ENCODE measurements at regions of chr17 and their contacts with region 1.

Region 1: DNA sequence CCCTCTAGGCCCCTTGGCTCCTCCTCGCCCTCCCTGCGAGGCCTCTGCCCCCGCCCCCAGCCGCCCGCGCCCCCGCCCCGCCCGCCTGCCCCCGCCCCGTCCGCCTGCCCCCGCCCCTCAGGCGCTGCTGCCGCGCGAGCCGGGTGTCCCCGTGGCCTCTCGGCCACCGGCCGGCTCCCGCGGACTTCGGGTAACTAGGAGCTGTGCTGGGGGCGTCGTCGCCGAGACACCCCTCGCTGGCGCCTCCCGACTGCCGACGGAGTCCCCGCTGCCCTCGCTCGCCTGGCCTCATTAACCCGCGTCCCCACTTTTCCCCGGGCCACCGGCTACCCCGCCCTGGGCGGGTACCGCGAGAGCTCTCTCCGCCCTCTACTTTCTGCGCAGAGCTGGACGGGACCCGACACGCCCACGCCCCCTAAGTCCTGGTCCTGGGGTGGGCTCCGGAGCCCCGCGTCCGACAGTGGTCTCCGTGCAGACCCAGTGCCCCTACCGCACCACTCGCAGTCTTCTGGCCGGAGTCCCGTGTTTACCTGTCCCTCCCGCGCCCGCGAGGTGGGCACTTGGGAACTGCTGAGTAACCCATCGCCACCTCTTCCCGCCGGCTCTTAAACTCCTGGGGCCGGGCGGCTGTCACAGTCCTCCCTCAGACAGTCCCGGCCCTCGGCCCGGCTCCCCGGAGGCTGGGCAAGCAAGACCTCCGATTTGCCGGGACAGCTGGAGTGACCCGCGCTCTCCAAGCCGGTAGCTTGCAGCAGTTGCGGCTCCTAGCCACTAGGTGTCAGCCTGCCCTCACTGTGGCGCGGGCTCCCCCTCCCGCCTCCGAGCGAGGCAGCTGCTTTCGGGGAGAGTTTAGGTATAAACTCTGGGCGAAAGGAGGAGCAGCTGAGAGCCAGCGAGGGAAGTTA is at the start of gene TLCD1:
- DNase-seq: peak; percentile 96
- ATAC-seq: peak; percentile 80
- total RNA-seq, gene TLCD1: 2.4 TPM

Region 2: GRCh38 chr17:28750178-28751047 is 23.9 kb after region 1 on chr17:
- intact Hi-C with region 1: loop called (anchors 1 kb)
- DNase-seq: peak; percentile 96
- ATAC-seq: peak; percentile 86

Region 3: GRCh38 chr17:28777178-28777577 is 50.7 kb after region 1 on chr17:
- intact Hi-C with region 1: no loop called
- DNase-seq: no peak
- ATAC-seq: no peak

Region 4: DNA sequence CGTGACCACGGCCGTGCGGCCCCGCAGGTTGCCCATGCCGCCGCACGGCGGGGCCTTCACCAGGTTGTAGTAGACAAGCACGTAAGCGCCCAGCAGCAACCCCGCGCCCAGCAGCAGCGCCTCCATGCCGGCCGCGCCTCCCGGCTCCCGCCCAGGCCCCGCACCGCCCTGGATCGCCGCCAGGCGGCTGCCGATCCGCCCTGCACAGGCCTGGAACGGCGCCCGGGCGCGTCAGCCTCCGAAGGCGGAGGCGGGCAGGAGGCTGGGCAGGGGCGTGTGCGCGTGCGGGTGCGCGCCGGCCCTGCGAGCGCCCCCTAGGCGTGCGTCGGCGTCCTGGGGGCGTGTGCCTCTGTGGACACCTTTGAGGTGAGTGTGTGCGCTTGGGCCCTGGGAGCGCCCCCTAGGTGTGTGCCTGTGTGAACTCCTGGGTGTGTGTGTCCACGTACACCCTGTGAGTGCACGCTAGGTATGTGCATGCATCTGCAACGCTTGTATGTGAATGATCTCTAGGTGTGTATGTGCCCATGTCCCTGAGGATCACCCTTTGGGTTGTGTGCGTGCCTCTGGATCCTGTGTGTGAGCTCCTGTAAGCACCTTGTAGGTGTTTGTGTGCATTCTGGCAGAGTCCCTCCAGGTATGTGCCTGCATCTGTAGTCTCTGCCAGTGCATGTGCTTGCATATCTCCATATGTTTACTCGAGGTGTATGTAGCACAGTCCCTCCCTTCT is 176.5 kb after region 1 on chr17 and contains the start of gene DHRS13:
- intact Hi-C with region 1: loop called (anchors 5 kb)
- DNase-seq: peak; percentile 96
- ATAC-seq: peak; percentile 90
- total RNA-seq, gene DHRS13: 3.0 TPM

Region 5: GRCh38 chr17:28951991-28952975 is 225.8 kb after region 1 on chr17:
- intact Hi-C with region 1: loop called (anchors 2 kb)
- DNase-seq: peak; percentile 97
- ATAC-seq: peak; percentile 88